MCF 10A (cell line): ENCODE measurements at regions of chr1 and their contacts with region 1.

Region 1: DNA sequence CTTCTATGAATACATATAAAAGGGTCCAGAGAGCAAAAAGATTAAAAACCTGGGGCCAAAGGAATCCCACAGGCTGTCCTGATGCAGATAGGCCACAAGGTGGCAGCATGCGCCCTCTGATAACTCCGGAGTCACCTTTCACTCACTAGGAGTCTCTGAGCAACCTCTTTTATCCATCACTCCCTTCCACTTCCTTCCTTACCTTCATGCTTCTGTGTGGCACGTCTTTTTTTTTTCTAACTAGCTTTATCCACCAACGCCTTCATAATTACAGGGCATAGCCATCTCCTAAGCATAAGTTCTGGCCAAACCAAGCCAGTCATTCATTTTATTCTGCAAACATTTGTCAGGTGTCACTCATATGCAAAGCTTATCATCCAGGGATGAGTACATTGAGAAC is 3.9 kb upstream of the PGLYRP4 start:
- DNase-seq: peak; percentile 87
- H3K4me3 Mint-ChIP-seq: no peak overlapping the region
- H3K27ac Mint-ChIP-seq: no peak overlapping the region
- H3K4me1 Mint-ChIP-seq: peaks cover 26% of the 10 kb centered on the region
- H3K27me3 Mint-ChIP-seq: peaks cover 40% of the 10 kb centered on the region
- CTCF ChIP-seq: peak; percentile 99

Region 2: GRCh38 chr1:152795686-152796085 is 556.8 kb before region 1 on chr1:
- CTCF ChIA-PET with region 1: no interaction called
- POLR2A ChIA-PET with region 1: no interaction called
- intact Hi-C with region 1: no loop called
- DNase-seq: no peak
- H3K4me3 Mint-ChIP-seq: no peak overlapping the region
- H3K27ac Mint-ChIP-seq: no peak overlapping the region
- H3K4me1 Mint-ChIP-seq: no peaks in the 10 kb centered on the region
- H3K27me3 Mint-ChIP-seq: no peaks in the 10 kb centered on the region
- CTCF ChIP-seq: no peak

Region 3: DNA sequence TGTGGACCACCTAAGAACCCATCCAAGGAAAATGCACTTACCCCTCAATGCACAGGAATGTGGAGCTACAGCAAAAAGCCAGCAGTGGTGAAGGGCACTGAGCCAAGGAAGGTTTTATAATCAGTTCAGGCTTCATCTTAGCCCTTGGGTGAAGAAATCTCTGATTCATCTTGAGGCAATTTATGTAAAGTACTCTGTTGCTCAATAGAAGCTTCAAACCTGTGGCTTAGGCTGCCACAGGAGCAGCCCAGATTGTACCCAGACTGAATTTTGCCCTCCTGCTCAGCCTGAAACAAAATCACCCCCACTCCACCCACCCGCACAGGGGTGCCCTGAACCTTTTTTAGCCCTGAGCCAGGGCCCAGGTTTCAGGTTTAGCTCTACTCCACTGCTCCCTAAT is 23.0 kb after region 1 on chr1 and contains the start of gene S100A12:
- CTCF ChIA-PET with region 1: interaction called, 39 read pairs
- POLR2A ChIA-PET with region 1: interaction called, 24 read pairs
- intact Hi-C with region 1: no loop called
- DNase-seq: peak; percentile 98
- H3K4me3 Mint-ChIP-seq: no peak within 1 kb of the TSS
- H3K27ac Mint-ChIP-seq: peak within 1 kb of the TSS; percentile 28
- H3K4me1 Mint-ChIP-seq: peaks cover 43% of the 10 kb centered on the region
- H3K27me3 Mint-ChIP-seq: no peaks in the 10 kb centered on the region
- CTCF ChIP-seq: no peak
- total RNA-seq, gene S100A12: not detected in 2 replicates

Region 4: DNA sequence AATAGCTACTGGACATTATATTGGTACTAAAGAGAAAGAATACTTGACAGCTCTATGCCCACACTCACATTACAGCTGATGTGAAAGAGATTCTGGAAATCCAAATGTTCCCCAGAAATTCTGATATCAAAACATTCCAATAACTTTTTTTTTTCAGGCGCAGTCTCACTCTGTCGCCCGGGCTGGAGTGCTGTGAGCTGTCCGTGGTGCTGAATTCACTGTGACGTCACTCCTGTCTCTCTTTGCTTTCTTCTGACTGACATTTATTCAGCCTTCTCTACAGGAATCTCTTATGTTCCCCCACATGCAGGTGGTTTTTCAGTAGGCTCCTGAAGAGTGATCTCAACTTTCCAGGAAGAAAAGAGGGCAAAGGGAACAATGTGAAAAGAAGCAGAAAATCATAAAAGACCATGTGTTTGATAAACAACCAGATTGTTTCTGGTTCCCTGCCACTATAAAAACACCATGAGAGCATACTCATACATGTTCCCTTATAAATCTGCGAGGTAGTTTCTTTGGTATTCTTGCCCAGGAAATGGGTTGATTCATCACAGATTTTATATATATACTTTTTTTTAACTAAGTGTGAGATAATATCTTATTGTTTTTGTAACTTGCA is 70.0 kb after region 1 on chr1:
- CTCF ChIA-PET with region 1: interaction called, 23 read pairs
- POLR2A ChIA-PET with region 1: interaction called, 5 read pairs
- intact Hi-C with region 1: no loop called
- DNase-seq: peak; percentile 84
- H3K4me3 Mint-ChIP-seq: no peak overlapping the region
- H3K27ac Mint-ChIP-seq: no peak overlapping the region
- H3K4me1 Mint-ChIP-seq: no peaks in the 10 kb centered on the region
- H3K27me3 Mint-ChIP-seq: peaks cover 86% of the 10 kb centered on the region
- CTCF ChIP-seq: no peak

Region 5: GRCh38 chr1:153494976-153495535 is 142.5 kb after region 1 on chr1:
- CTCF ChIA-PET with region 1: interaction called, 1,438 read pairs
- POLR2A ChIA-PET with region 1: interaction called, 18 read pairs
- intact Hi-C with region 1: loop called (anchors 1 kb)
- DNase-seq: peak; percentile 81
- H3K4me3 Mint-ChIP-seq: no peak overlapping the region
- H3K27ac Mint-ChIP-seq: no peak overlapping the region
- H3K4me1 Mint-ChIP-seq: peaks cover 27% of the 10 kb centered on the region
- H3K27me3 Mint-ChIP-seq: peaks cover 39% of the 10 kb centered on the region
- CTCF ChIP-seq: peak; percentile 99

Region 6: GRCh38 chr1:153532769-153533599 is 180.5 kb after region 1 on chr1:
- CTCF ChIA-PET with region 1: interaction called, 13 read pairs
- POLR2A ChIA-PET with region 1: interaction called, 6 read pairs
- intact Hi-C with region 1: no loop called
- DNase-seq: peak; percentile 97
- H3K4me3 Mint-ChIP-seq: peak overlapping the region; percentile 99
- H3K27ac Mint-ChIP-seq: peak overlapping the region; percentile 75
- H3K4me1 Mint-ChIP-seq: peaks cover 47% of the 10 kb centered on the region
- H3K27me3 Mint-ChIP-seq: no peaks in the 10 kb centered on the region
- CTCF ChIP-seq: peak; percentile 93